Activated naive CD4-positive, alpha-beta T cell treated with anti-CD3 and anti-CD28 coated beads for 36 hours (primary cell): ENCODE measurements at regions of chr16 and their contacts with region 1.

Region 1: GRCh38 chr16:31094424-31095120 is at the start of gene VKORC1:
- DNase-seq: peak; percentile 95
- H3K4me3 Mint-ChIP-seq: peak within 1 kb of the TSS; percentile 89
- H3K27ac Mint-ChIP-seq: peak within 1 kb of the TSS; percentile 83
- H3K4me1 Mint-ChIP-seq: peaks cover 31% of the 10 kb centered on the region
- H3K27me3 Mint-ChIP-seq: no peaks in the 10 kb centered on the region
- total RNA-seq, gene VKORC1: 43.4 to 47.8 TPM

Region 2: GRCh38 chr16:30874821-30875717 is 219.5 kb before region 1 on chr16:
- CTCF ChIA-PET with region 1: no interaction called
- intact Hi-C with region 1: loop called (anchors 10 kb)
- DNase-seq: peak; percentile 90
- H3K4me3 Mint-ChIP-seq: peak overlapping the region; percentile 92
- H3K27ac Mint-ChIP-seq: peak overlapping the region; percentile 96
- H3K4me1 Mint-ChIP-seq: peaks cover 40% of the 10 kb centered on the region
- H3K27me3 Mint-ChIP-seq: no peaks in the 10 kb centered on the region

Region 3: GRCh38 chr16:30957456-30958174 is 137.0 kb before region 1 on chr16 and contains the start of gene SETD1A:
- CTCF ChIA-PET with region 1: interaction called, 6 read pairs
- intact Hi-C with region 1: loop called (anchors 1 kb)
- DNase-seq: peak; percentile 99
- H3K4me3 Mint-ChIP-seq: peak within 1 kb of the TSS; percentile 93
- H3K27ac Mint-ChIP-seq: peak within 1 kb of the TSS; percentile 99
- H3K4me1 Mint-ChIP-seq: peaks cover 27% of the 10 kb centered on the region
- H3K27me3 Mint-ChIP-seq: no peaks in the 10 kb centered on the region
- total RNA-seq, gene SETD1A: 14.3 to 14.6 TPM

Region 4: DNA sequence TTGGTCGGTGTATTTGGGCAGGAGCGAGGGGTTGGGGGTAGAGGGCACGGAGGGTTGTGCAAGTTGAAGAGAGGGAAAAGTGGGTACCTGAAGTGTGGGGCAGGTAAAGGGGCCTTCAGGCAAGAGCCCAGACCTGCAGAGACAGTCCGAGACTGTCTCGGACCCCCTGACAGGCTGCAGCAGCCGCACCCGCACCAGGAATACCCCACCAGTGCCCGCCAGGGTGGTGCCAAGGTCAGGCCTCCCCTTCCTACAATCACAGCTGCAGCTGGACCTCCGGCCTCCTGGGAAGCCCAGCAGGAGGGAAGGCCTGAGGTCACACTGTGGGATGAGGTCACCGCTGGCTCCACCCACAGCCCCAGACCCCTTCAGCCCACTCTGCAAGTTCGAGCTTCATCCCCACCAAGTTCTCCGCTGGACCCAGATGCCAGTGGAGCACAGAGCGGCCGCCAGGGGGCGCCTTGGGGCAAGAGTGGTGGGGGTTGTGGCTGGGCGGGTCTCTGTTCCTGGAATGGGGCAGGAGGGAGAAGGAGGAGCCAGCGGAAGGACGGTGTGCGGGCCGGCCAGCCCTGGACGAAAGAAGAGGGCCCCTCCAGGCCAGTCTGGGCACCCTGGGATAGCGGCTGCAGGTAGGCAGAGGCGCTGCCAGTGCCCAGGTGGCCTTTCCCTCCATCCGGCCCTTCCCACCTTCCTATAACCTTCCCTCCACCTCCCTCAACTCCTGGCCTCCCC is 109.7 kb before region 1 on chr16 and contains the start of gene HSD3B7:
- CTCF ChIA-PET with region 1: interaction called, 7 read pairs
- intact Hi-C with region 1: loop called (anchors 1 kb)
- DNase-seq: peak; percentile 87
- H3K4me3 Mint-ChIP-seq: no peak within 1 kb of the TSS
- H3K27ac Mint-ChIP-seq: no peak within 1 kb of the TSS
- H3K4me1 Mint-ChIP-seq: no peaks in the 10 kb centered on the region
- H3K27me3 Mint-ChIP-seq: no peaks in the 10 kb centered on the region
- total RNA-seq, gene HSD3B7: 0.69 to 0.98 TPM

Region 5: GRCh38 chr16:31032736-31033708 is 61.5 kb before region 1 on chr16 and contains the start of gene STX4:
- CTCF ChIA-PET with region 1: no interaction called
- intact Hi-C with region 1: loop called (anchors 1 kb)
- DNase-seq: peak; percentile 99
- H3K4me3 Mint-ChIP-seq: peak within 1 kb of the TSS; percentile 96
- H3K27ac Mint-ChIP-seq: peak within 1 kb of the TSS; percentile 93
- H3K4me1 Mint-ChIP-seq: peaks cover 22% of the 10 kb centered on the region
- H3K27me3 Mint-ChIP-seq: no peaks in the 10 kb centered on the region
- total RNA-seq, gene STX4: 32.9 to 38.0 TPM

Region 6: DNA sequence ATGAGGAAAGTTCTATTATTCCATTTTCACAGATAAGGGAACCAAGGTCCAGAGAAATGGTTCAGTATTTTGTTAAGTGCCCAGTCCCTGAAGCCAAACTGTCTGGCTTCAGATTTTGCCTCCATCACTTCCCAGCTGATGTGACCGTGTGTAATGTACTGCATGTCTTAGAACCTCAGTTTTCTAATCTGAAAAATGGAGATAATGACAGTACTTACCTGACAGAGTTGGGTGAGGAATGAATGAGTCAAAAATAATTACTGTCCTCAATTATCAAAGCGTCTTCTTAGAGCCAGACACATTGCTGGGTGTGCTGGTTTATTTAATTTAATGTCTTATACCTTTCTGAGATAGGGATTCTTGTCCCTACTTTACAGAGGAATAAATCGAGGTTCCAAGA is 27.2 kb before region 1 on chr16:
- CTCF ChIA-PET with region 1: no interaction called
- intact Hi-C with region 1: no loop called
- DNase-seq: no peak
- H3K4me3 Mint-ChIP-seq: no peak overlapping the region
- H3K27ac Mint-ChIP-seq: no peak overlapping the region
- H3K4me1 Mint-ChIP-seq: peaks cover 51% of the 10 kb centered on the region
- H3K27me3 Mint-ChIP-seq: no peaks in the 10 kb centered on the region

Region 7: GRCh38 chr16:31083981-31084380 is 10.6 kb before region 1 on chr16:
- CTCF ChIA-PET with region 1: no interaction called
- intact Hi-C with region 1: no loop called
- DNase-seq: no peak
- H3K4me3 Mint-ChIP-seq: no peak overlapping the region
- H3K27ac Mint-ChIP-seq: no peak overlapping the region
- H3K4me1 Mint-ChIP-seq: peaks cover 10% of the 10 kb centered on the region
- H3K27me3 Mint-ChIP-seq: no peaks in the 10 kb centered on the region

Region 8: DNA sequence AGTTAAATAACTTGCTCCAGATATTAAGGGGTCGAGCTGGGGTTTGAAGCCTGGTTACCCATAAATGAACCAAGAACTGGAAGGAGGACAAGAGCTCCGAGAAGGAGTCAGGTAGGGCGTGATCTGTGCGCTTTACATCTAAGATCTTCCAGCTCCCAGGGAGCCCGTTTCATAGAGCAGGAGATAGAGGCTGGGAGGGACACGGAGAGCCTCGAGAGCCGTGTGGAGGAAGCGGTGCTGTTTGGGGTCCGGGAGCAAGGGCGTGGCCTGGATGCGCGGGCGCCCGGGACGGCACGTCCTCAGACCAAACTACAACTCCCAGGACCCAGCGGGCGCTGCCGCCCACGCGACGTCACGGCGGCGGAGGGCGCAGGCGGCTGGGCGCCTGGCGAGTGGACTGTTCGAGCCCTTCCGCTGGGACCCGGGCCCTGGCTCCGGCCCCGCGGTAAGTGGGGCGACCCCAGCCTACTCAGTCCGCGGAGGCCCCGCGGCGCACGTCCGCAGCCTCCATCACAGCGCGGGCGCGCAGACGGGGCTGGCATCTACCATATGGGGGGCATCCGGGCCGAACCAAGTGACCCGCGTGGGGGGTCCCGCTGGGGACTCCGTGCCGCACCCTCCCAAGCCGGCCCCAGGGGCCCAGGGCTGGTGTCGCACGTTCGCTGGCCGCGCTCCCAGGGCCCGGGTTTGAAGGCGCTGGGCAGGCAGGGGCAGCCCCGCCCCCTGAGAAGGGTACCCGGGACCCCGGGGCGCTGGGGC is 13.6 kb after region 1 on chr16 and contains the start of gene BCKDK:
- CTCF ChIA-PET with region 1: no interaction called
- intact Hi-C with region 1: loop called (anchors 2 kb)
- DNase-seq: peak; percentile 74
- H3K4me3 Mint-ChIP-seq: peak within 1 kb of the TSS; percentile 89
- H3K27ac Mint-ChIP-seq: peak within 1 kb of the TSS; percentile 80
- H3K4me1 Mint-ChIP-seq: peaks cover 27% of the 10 kb centered on the region
- H3K27me3 Mint-ChIP-seq: no peaks in the 10 kb centered on the region
- total RNA-seq, gene BCKDK: 21.3 to 23.1 TPM

Region 9: DNA sequence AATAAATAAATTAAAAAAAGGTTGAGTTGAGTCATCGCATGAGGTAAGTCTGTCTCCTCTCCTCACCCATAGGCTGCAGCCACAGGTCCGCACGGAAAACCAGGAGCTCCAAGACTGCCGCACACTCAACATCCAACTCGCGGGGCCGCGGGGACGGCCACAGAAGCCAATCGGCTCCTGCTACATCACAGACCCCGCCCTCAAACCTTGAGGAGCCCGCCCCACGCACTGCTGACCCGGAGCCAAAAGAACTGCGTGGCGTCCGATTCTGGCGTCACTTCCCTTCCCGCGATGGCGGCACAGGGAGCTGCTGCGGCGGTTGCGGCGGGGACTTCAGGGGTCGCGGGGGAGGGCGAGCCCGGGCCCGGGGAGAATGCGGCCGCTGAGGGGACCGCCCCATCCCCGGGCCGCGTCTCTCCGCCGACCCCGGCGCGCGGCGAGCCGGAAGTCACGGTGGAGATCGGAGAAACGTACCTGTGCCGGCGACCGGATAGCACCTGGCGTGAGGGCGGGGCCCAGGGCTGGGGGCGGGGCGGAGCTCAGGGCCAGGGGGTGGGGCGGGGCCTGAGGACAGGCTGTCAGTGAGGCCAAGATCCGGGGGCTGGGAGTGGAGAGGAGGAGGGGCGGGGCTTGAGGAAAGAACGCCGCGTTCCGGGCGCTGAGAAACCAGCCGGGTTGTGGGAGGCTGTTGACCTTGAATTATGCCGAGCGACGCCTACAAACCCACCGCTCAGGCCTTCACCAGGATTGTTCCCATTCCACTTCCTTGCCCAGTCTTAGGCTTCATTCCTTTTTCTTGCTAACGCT is 23.0 kb after region 1 on chr16 and contains the start of gene KAT8:
- CTCF ChIA-PET with region 1: no interaction called
- intact Hi-C with region 1: loop called (anchors 1 kb)
- DNase-seq: peak; percentile 99
- H3K4me3 Mint-ChIP-seq: peak within 1 kb of the TSS; percentile 82
- H3K27ac Mint-ChIP-seq: peak within 1 kb of the TSS; percentile 70
- H3K4me1 Mint-ChIP-seq: peaks cover 28% of the 10 kb centered on the region
- H3K27me3 Mint-ChIP-seq: no peaks in the 10 kb centered on the region
- total RNA-seq, gene KAT8: 58.1 to 64.5 TPM

Region 10: DNA sequence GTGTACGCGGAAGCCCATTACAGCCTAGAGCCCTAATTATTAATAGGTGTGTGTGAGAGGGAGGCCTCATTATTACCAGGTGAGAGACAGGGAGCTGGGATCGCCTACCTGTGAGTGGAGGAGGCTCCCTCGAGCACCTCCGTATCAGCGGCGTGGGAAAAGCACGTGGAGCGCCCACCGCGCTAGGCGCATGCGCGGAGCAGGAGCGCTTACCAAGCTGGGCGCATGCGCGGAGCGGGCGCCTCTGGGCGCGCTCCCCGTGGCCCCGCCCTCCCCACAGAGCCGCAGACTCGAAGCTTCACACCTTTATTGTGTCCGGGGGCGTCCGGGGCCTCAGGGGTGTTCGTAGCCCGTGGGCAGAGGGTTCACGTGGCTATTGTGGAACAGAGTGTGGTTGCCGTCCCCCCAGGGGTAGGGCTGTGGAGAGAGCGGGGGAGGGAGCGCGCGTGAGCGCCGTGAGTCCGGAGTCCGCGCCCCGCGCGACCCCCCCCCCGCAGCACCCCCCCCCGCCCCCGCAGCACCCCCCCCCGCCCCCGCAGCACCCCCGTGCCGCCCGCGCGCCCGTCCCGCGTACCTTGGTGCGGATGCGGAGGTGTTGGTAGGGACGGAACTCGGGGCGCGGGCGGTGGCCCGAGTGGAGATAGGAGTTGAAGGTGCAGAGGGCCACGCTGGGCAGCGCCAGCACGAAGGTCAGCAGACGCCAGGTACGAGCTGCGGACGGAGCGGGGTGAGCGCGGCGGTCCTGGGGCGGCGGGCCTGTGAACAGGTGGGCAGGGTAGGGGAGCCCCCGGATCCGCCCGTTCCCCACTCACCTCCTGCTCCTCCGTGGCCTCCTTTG is 333.1 kb after region 1 on chr16:
- CTCF ChIA-PET with region 1: no interaction called
- intact Hi-C with region 1: no loop called
- DNase-seq: peak; percentile 53
- H3K4me3 Mint-ChIP-seq: no peak overlapping the region
- H3K27ac Mint-ChIP-seq: no peak overlapping the region
- H3K4me1 Mint-ChIP-seq: peaks cover 6% of the 10 kb centered on the region
- H3K27me3 Mint-ChIP-seq: peaks cover 5% of the 10 kb centered on the region